Activated T-helper 1 cell treated with anti-CD3 and anti-CD28 coated beads, Interleukin-12 subunit alpha, Interleukin-12 subunit beta, Interleukin-2, Interleukin-4 antibody, amounts not matched to agents 30 ng/mL and 10 ng/mL and 1 ng/mL, durations not matched to agents 14 hours and 24 hours and 36 hours (primary cell): ENCODE measurements at regions of chr9 and their contacts with region 1.

Region 1: GRCh38 chr9:21078717-21079116 is 975 bp upstream of the IFNB1 start:
- DNase-seq: no peak
- H3K4me3 Mint-ChIP-seq: no peak overlapping the region
- H3K27ac Mint-ChIP-seq: no peak overlapping the region
- H3K4me1 Mint-ChIP-seq: peaks cover 32% of the 10 kb centered on the region
- H3K27me3 Mint-ChIP-seq: peaks cover 16% of the 10 kb centered on the region

Region 2: GRCh38 chr9:21060919-21061561 is 17.7 kb before region 1 on chr9:
- intact Hi-C with region 1: loop called (anchors 2 kb)
- DNase-seq: peak; percentile 12
- H3K4me3 Mint-ChIP-seq: peak overlapping the region; percentile 58
- H3K27ac Mint-ChIP-seq: peak overlapping the region; percentile 13
- H3K4me1 Mint-ChIP-seq: peaks cover 24% of the 10 kb centered on the region
- H3K27me3 Mint-ChIP-seq: no peaks in the 10 kb centered on the region

Region 3: DNA sequence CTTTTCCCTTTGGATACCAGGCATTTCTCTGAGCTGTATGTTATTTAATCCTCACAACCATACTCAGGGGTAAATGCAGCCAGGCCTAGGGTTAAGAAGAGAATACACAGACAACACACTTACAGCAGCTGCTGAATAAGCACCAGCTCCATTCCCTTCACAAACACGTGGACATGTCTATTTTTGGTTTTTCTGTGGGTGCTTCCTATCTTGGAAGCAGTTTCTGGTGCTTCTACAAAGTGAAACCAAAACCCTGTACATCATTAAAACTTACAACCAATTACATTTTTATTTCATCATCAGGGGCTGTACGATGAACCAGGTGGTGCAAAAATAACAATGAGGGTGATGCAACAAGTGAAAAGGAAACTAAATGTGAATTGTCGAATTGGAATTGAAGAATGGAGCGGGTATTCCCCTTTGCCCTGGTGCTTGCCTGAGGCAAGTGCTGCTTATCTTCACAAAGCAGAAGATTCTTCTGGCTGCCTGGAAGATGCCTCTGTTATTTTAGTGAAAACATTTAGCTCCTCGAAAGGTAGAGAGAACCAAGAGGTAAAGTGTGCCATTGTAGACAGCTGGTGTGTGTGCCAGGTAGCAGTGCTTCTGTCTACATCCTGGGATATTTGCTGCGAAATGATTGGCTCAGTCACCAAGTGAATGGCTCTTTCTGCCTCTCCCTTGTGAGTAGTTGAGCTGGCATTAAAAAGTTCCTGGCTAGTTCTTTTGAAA is 17.6 kb after region 1 on chr9:
- intact Hi-C with region 1: loop called (anchors 1 kb)
- DNase-seq: peak; percentile 38
- H3K4me3 Mint-ChIP-seq: peak overlapping the region; percentile 54
- H3K27ac Mint-ChIP-seq: peak overlapping the region; percentile 56
- H3K4me1 Mint-ChIP-seq: peaks cover 35% of the 10 kb centered on the region
- H3K27me3 Mint-ChIP-seq: no peaks in the 10 kb centered on the region